MCF 10A (cell line): ENCODE measurements at regions of chr2 and their contacts with region 1.

Region 1: GRCh38 chr2:193837111-193837737 is 1642.5 kb upstream of the TMEFF2 start:
- DNase-seq: peak; percentile 51
- H3K4me3 Mint-ChIP-seq: no peak overlapping the region
- H3K27ac Mint-ChIP-seq: peak overlapping the region; percentile 35
- H3K4me1 Mint-ChIP-seq: peaks cover 5% of the 10 kb centered on the region
- H3K27me3 Mint-ChIP-seq: no peaks in the 10 kb centered on the region
- CTCF ChIP-seq: no peak

Region 2: DNA sequence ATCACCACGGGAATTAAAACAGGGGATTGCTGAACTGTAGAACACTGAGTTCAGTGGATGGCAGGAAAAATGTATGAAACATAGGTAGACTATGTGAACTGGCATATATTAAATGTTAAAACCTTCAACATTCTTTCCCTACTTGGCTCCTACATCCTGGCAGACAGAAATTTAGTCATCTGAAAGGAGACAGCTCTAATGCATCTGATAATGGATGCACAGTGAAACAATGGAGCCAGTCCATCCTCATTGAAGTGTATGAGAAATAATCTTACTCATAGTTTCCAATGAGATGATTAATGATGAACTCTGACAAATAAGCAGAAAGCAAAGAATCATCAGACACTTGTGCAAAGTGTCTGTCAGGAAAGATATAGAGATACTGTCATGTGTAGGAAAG is 12.8 kb before region 1 on chr2:
- CTCF ChIA-PET with region 1: no interaction called
- POLR2A ChIA-PET with region 1: no interaction called
- intact Hi-C with region 1: loop called (anchors 1 kb)
- DNase-seq: peak; percentile 51
- H3K4me3 Mint-ChIP-seq: no peak overlapping the region
- H3K27ac Mint-ChIP-seq: no peak overlapping the region
- H3K4me1 Mint-ChIP-seq: peaks cover 7% of the 10 kb centered on the region
- H3K27me3 Mint-ChIP-seq: no peaks in the 10 kb centered on the region
- CTCF ChIP-seq: no peak